ENCODE measurements at regions of chr13 and their contacts with region 1.

Region 1: GRCh38 chr13:30978981-30979956 is 46.8 kb downstream of the TEX26 start:
- DNase-seq: peak in 1 of 2 donors; percentile 77
- ATAC-seq: peak; percentile 39
- H3K4me3 ChIP-seq: no peak overlapping the region
- H3K27ac ChIP-seq: peak overlapping the region in 1 of 2 donors; percentile 4
- H3K4me1 ChIP-seq: peaks cover 0 to 2% of the 10 kb centered on the region in 2 donors
- H3K27me3 ChIP-seq: no peaks in the 10 kb centered on the region

Region 2: GRCh38 chr13:30847650-30848307 is 131.5 kb before region 1 on chr13:
- intact Hi-C with region 1: loop called in 1 of 2 experiments (anchors 5 kb)
- DNase-seq: peak in 1 of 2 donors; percentile 71
- ATAC-seq: peak; percentile 79
- H3K4me3 ChIP-seq: no peak overlapping the region
- H3K27ac ChIP-seq: peak overlapping the region; percentile 29 to 73
- H3K4me1 ChIP-seq: no peaks in the 10 kb centered on the region
- H3K27me3 ChIP-seq: no peaks in the 10 kb centered on the region

Region 3: GRCh38 chr13:30905932-30906383 is 73.3 kb before region 1 on chr13 and contains the start of gene MEDAG:
- intact Hi-C with region 1: loop called in 1 of 2 experiments (anchors 5 kb)
- DNase-seq: peak; percentile 92 to 96
- ATAC-seq: peak; percentile 92
- H3K4me3 ChIP-seq: peak within 1 kb of the TSS; percentile 37 to 49
- H3K27ac ChIP-seq: peak within 1 kb of the TSS; percentile 79 to 90
- H3K4me1 ChIP-seq: peaks cover 0 to 8% of the 10 kb centered on the region in 2 donors
- H3K27me3 ChIP-seq: no peaks in the 10 kb centered on the region
- total RNA-seq, gene MEDAG: 146 to 188 TPM

Region 4: GRCh38 chr13:30915691-30916541 is 63.4 kb before region 1 on chr13:
- intact Hi-C with region 1: loop called (anchors 5 kb)
- DNase-seq: no peak
- ATAC-seq: peak; percentile 30
- H3K4me3 ChIP-seq: no peak overlapping the region
- H3K27ac ChIP-seq: no peak overlapping the region
- H3K4me1 ChIP-seq: peaks cover 0 to 12% of the 10 kb centered on the region in 2 donors
- H3K27me3 ChIP-seq: no peaks in the 10 kb centered on the region

Region 5: DNA sequence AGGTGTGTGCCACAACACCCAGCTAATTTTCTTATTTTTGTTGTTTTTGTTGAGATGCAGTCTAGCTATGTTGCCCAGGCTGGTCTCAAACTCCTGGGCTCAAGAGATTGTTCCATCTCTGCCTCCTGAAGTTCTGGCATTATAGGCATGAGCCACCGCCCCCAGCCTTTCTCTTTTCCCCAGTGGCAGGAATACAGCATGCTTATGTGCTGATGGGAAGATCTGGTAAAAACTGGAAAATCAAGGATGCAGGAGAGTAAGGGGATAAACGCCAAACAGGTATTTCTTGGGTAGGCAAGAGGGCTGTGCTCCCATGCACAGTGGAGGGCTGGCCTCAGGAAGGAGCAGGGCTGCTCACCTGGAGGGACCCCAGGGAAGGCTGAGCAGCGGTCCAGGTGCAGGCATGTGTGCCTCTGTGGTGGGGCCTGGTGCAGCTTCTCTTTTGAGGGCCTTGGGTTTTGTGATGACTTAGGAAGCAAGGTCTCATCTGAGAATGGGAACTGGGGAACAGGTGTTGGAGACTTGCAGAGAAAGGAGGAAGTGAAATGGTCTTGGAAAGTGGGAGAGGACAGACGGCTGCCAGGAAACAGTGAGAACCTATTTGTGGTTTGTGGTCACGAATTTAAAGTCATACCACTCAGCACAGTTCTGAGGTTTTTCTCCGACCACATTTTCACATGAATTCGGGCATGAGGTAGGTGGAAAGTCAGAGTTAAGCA is 59.7 kb after region 1 on chr13:
- intact Hi-C with region 1: no loop called
- DNase-seq: no peak
- ATAC-seq: no peak
- H3K4me3 ChIP-seq: no peak overlapping the region
- H3K27ac ChIP-seq: no peak overlapping the region
- H3K4me1 ChIP-seq: no peaks in the 10 kb centered on the region
- H3K27me3 ChIP-seq: no peaks in the 10 kb centered on the region

Region 6: DNA sequence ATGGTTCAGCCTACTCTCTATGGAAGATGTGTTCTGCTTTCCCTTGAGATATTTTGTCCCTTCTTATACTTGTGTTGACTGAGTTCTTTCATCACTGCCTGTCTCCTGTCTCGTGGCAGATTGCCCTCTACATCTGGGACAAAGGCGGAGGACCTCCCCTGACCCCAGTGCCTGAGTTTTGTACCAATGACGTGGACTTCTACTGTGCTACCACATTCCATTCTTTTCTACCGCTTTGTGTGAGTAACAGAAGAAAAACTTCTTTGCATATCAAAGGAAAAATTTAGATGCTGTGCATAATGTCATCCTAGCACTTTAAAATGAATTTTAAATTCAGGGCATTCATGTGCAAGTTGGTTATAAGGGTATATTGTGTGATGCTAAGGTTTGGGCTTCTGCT is 295.1 kb after region 1 on chr13:
- intact Hi-C with region 1: no loop called
- DNase-seq: no peak
- ATAC-seq: no peak
- H3K4me3 ChIP-seq: no peak overlapping the region
- H3K27ac ChIP-seq: no peak overlapping the region
- H3K4me1 ChIP-seq: no peaks in the 10 kb centered on the region
- H3K27me3 ChIP-seq: no peaks in the 10 kb centered on the region